ENCODE measurements at regions of chr13 and their contacts with region 1.

Region 1: GRCh38 chr13:52159321-52160086 is at the start of gene NEK3:
- DNase-seq: peak; percentile 83
- H3K4me3 ChIP-seq: peak within 1 kb of the TSS; percentile 73 to 86 (median 78)
- H3K27ac ChIP-seq: peak within 1 kb of the TSS; percentile 82 to 90 (median 87)
- H3K4me1 ChIP-seq: peaks cover 0 to 12% (median 9%) of the 10 kb centered on the region in 4 donors
- H3K27me3 ChIP-seq: no peaks in the 10 kb centered on the region
- CTCF ChIP-seq: no peak
- EP300 ChIP-seq: no peak
- POLR2A ChIP-seq: no peak
- total RNA-seq, gene NEK3: 8.7 to 22.2 (median 14.1) TPM

Region 2: DNA sequence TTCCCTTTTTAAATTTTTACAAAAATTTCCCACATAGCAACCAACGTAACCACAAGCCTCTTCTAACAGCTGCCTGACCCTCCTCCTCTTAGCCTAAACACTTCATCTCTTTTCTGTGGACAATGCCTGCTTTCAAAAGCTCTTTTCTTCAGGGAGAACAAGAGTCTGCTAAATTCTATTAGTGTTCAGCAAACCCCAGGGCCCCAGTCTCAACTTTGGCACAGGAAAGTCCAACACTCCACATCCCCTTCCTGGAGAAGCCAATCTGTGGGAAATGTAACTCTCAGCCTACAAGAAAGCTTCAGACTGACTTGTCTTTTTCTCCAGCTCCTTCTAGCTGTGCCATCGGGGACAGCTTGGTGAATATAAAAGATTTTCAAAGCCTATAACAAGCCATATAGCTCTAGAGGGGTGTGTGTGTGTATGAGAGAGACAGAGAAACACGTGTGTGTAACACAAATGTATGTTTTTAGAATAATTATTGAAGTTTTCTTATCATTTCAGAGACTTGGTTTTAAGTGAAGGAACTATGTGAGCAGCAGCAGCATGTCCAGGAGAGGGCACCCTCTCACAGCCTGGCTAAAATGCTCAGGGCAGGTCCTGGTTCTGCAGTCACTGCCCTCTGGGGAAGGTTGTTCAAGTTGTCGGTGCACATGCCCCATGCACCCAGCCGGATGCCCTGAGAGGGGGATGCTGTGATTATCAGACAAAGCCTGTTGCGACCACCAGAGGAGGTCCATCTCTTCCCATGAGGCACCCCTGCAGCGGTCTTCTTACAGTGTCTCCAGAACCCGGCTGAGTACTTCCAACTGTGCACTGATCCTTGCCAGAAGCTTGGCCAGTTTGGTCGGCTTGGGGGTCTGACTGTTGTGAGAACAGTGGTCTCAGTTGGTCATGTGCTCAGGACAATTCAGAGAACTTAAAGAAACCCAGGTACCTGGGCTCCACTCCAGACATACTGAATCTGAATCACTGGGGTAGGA is 263.3 kb before region 1 on chr13:
- intact Hi-C with region 1: no loop called
- DNase-seq: no peak
- H3K4me3 ChIP-seq: no peak overlapping the region
- H3K27ac ChIP-seq: no peak overlapping the region
- H3K4me1 ChIP-seq: no peaks in the 10 kb centered on the region
- H3K27me3 ChIP-seq: no peaks in the 10 kb centered on the region
- CTCF ChIP-seq: peak in 2 of 4 experiments; percentile 43 to 51
- EP300 ChIP-seq: no peak
- POLR2A ChIP-seq: no peak

Region 3: DNA sequence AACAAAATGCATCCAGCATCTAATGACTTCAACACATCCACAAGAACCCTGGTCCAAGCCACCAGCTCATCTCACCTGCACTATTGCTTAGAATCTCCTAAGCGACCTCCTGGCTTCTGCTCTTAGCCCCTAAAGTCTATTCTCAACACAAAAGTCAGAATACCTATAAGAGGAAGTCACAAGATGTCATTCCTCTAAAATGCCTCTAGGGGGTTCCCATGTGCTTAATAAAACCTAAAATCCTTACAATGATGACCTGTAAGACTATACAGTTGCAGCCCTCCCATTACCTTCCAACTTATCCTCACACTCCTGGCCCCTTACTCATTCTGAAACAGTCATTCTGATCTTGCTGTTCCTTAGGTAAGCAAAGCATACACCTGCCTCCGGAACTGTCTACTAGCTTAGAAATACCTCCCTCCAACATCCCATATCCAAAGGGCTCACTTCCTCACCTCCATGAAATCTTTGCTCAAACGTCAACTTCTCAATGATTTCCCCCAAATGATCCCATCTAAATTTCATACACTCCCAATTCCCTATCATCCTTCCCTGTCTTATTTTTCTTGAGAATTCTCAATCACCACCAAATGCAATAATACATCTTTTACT is 158.3 kb before region 1 on chr13:
- intact Hi-C with region 1: no loop called
- DNase-seq: no peak
- H3K4me3 ChIP-seq: no peak overlapping the region
- H3K27ac ChIP-seq: no peak overlapping the region
- H3K4me1 ChIP-seq: peaks cover 0 to 29% (median 23%) of the 10 kb centered on the region in 4 donors
- H3K27me3 ChIP-seq: no peaks in the 10 kb centered on the region
- CTCF ChIP-seq: peak; percentile 7 to 74 (median 54)
- EP300 ChIP-seq: no peak
- POLR2A ChIP-seq: no peak

Region 4: GRCh38 chr13:52109116-52109670 is 50.3 kb before region 1 on chr13:
- intact Hi-C with region 1: no loop called
- DNase-seq: no peak
- H3K4me3 ChIP-seq: no peak overlapping the region
- H3K27ac ChIP-seq: no peak overlapping the region
- H3K4me1 ChIP-seq: no peaks in the 10 kb centered on the region
- H3K27me3 ChIP-seq: no peaks in the 10 kb centered on the region
- CTCF ChIP-seq: no peak
- EP300 ChIP-seq: no peak
- POLR2A ChIP-seq: no peak

Region 5: DNA sequence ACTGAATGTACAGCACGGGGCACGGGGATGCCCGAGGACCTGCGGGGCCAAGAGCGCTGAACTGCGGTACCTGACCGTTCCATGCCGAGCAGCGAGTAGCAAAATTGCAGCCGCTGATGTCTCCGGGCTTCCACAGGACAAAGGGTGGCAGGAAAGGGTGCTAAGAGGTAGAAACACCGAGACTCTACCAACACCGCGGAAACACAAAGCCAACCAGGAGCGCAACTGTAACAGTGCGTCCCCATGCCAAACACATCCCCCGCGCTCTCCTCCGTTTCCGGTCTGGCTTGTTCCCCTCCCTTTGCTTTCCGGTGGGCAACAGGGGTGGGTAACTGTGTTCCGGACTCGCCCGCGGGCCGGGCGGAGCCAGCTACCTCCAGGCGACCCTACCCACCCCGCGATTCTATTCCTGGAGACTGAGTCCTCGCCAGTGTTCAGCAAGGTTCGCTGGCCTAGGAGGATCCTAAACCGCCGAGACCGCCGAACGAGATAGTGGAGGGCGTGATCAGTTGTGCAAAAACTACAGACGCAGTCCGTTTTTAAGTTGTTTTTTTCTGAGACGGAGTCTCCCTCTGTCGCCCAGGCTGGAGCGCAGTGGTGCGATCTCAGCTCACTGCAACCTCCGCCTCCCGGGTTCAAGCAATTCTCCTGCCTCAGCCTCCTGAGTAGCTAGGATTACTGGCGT is 34.8 kb after region 1 on chr13:
- intact Hi-C with region 1: loop called (anchors 5 kb)
- DNase-seq: peak; percentile 93
- H3K4me3 ChIP-seq: peak overlapping the region; percentile 58 to 83 (median 76)
- H3K27ac ChIP-seq: peak overlapping the region; percentile 80 to 90 (median 88)
- H3K4me1 ChIP-seq: peaks cover 2 to 24% (median 15%) of the 10 kb centered on the region in 4 donors
- H3K27me3 ChIP-seq: no peaks in the 10 kb centered on the region
- CTCF ChIP-seq: no peak
- EP300 ChIP-seq: no peak
- POLR2A ChIP-seq: peak in 1 of 2 donors; percentile 38